ENCODE measurements at regions of chr21 and their contacts with region 1.

Region 1: GRCh38 chr21:32257962-32258785 is 20.7 kb downstream of the MIS18A start:
- DNase-seq: peak in 1 of 2 donors; percentile 72
- ATAC-seq: peak; percentile 90
- H3K4me3 ChIP-seq: no peak overlapping the region
- H3K27ac ChIP-seq: no peak overlapping the region
- H3K4me1 ChIP-seq: no peaks in the 10 kb centered on the region
- H3K27me3 ChIP-seq: no peaks in the 10 kb centered on the region

Region 2: GRCh38 chr21:31731802-31732596 is 526.2 kb before region 1 on chr21 and contains the start of gene SCAF4:
- intact Hi-C with region 1: loop called in 1 of 2 experiments (anchors 5 kb)
- DNase-seq: peak; percentile 94 to 97
- ATAC-seq: peak; percentile 96
- H3K4me3 ChIP-seq: peak within 1 kb of the TSS; percentile 80 to 100
- H3K27ac ChIP-seq: peak within 1 kb of the TSS; percentile 83 to 87
- H3K4me1 ChIP-seq: peaks cover 0 to 6% of the 10 kb centered on the region in 2 donors
- H3K27me3 ChIP-seq: no peaks in the 10 kb centered on the region
- total RNA-seq, gene SCAF4: 32.2 to 33.9 TPM

Region 3: GRCh38 chr21:31866077-31866511 is 392.1 kb before region 1 on chr21:
- intact Hi-C with region 1: loop called (anchors 1 to 2 kb)
- DNase-seq: peak; percentile 89 to 96
- ATAC-seq: peak; percentile 88
- H3K4me3 ChIP-seq: no peak overlapping the region
- H3K27ac ChIP-seq: no peak overlapping the region
- H3K4me1 ChIP-seq: no peaks in the 10 kb centered on the region
- H3K27me3 ChIP-seq: no peaks in the 10 kb centered on the region

Region 4: GRCh38 chr21:32021319-32021994 is 236.7 kb before region 1 on chr21:
- intact Hi-C with region 1: loop called in 1 of 2 experiments (anchors 10 kb)
- DNase-seq: peak; percentile 78 to 86
- ATAC-seq: peak; percentile 44
- H3K4me3 ChIP-seq: no peak overlapping the region
- H3K27ac ChIP-seq: no peak overlapping the region
- H3K4me1 ChIP-seq: no peaks in the 10 kb centered on the region
- H3K27me3 ChIP-seq: no peaks in the 10 kb centered on the region

Region 5: GRCh38 chr21:32143241-32143939 is 114.8 kb before region 1 on chr21:
- intact Hi-C with region 1: loop called (anchors 5 kb)
- DNase-seq: peak in 1 of 2 donors; percentile 58
- ATAC-seq: peak; percentile 72
- H3K4me3 ChIP-seq: no peak overlapping the region
- H3K27ac ChIP-seq: peak overlapping the region in 1 of 2 donors; percentile 37
- H3K4me1 ChIP-seq: no peaks in the 10 kb centered on the region
- H3K27me3 ChIP-seq: no peaks in the 10 kb centered on the region

Region 6: GRCh38 chr21:32371913-32372314 is 113.7 kb after region 1 on chr21:
- intact Hi-C with region 1: no loop called
- DNase-seq: no peak
- ATAC-seq: peak; percentile 85
- H3K4me3 ChIP-seq: no peak overlapping the region
- H3K27ac ChIP-seq: peak overlapping the region; percentile 24 to 83
- H3K4me1 ChIP-seq: peaks cover 0 to 4% of the 10 kb centered on the region in 2 donors
- H3K27me3 ChIP-seq: no peaks in the 10 kb centered on the region